ENCODE measurements at regions of chr17 and their contacts with region 1.

Region 1: DNA sequence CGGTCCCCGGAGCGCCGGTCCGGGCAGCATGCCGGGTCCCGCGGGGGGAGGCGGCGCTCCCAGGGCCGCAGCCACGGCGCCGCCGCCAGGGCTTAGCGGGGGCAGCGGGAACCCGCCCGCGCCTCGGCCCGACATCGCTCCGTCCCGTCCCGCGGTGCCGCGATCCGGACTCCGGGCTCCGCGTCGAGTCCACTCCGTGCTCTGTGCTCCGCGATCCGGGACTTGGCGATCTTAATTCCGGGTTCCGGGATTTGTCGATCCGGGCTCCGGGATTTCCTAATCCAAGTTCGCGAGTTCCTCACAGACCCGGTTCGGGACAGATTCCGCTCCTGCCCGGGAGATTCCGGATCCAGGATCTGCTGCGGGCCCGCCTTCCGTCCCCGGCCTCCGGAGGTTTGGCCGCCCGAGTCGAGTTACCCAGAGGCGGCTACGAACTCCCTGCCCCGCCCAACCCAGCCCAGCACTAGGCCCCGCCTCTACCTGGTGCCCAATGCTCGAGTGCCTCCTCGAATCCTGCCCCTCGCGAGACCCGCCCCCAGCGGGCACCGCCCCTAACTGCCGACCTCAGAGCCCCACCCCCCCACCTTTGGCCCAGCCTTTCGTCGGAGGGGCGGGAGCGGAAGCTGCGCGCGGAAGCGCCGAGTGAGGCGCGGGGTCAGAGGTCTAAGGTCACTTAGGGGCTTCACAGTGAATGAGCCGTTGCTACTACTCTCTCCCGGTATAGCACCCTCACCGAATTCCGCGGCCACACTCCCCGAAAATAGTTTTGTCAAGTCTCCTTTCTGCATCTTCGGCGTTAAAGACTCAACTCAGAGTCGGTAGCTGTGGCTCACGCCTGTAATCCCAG is at the start of gene SMARCD2:
- DNase-seq: peak; percentile 92 to 97
- H3K4me3 ChIP-seq: peak within 1 kb of the TSS; percentile 86
- H3K27ac ChIP-seq: peak within 1 kb of the TSS; percentile 47; the same call in 1 of the 2 replicates
- H3K4me1 ChIP-seq: peaks cover 43% of the 10 kb centered on the region
- H3K27me3 ChIP-seq: no peaks in the 10 kb centered on the region
- CTCF ChIP-seq: no peak
- total RNA-seq, gene SMARCD2: 73.6 and 98.7 TPM in 2 replicates

Region 2: GRCh38 chr17:63171428-63172393 is 671.1 kb before region 1 on chr17:
- CTCF ChIA-PET with region 1: no interaction called
- POLR2A ChIA-PET with region 1: no interaction called
- intact Hi-C with region 1: no loop called
- DNase-seq: no peak
- H3K4me3 ChIP-seq: no peak overlapping the region
- H3K27ac ChIP-seq: no peak overlapping the region
- H3K4me1 ChIP-seq: no peaks in the 10 kb centered on the region
- H3K27me3 ChIP-seq: no peaks in the 10 kb centered on the region
- CTCF ChIP-seq: no peak

Region 3: DNA sequence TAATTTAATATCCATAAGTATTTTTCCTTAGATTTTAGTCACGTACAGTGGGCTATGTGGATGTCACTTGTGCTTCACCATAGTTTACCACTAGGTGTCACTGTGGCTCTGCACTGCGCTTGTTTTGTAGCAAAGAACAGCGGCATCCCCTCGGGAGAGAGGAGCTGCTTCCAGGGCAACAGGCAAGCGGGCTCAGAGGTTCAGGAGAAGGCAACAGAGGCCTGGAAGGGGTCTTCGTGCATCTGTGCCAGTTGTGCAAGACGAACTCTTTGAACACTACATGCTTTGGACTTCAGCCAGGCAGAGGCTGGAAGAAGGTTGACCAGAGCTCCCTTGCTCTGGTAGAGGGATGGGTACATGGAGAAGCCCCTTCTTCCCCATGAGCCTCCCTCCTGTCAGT is 417.3 kb before region 1 on chr17:
- CTCF ChIA-PET with region 1: no interaction called
- POLR2A ChIA-PET with region 1: no interaction called
- intact Hi-C with region 1: loop called (anchors 10 kb)
- DNase-seq: peak in 1 of 2 experiments; percentile 66
- H3K4me3 ChIP-seq: no peak overlapping the region
- H3K27ac ChIP-seq: no peak overlapping the region
- H3K4me1 ChIP-seq: no peaks in the 10 kb centered on the region
- H3K27me3 ChIP-seq: no peaks in the 10 kb centered on the region
- CTCF ChIP-seq: peak; percentile 96

Region 4: DNA sequence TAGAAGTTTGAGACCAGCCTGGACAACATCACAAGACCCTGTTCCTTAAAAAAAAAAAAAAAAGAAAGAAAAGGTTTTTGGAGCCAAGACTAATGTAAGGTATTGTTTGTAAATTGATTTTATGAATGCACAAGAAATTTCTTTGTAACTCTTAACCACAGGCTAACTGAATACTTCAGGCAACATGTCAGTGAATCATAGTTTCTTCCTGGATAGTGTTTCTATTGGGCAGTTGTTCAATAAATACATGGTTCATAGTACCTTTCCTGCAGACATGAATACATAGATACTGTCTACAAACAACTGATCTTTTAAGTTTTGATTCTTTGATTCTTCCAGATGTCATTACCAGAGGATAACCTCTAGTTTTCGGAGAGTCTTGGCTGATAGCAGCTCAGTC is 57.2 kb before region 1 on chr17:
- CTCF ChIA-PET with region 1: no interaction called
- POLR2A ChIA-PET with region 1: no interaction called
- intact Hi-C with region 1: no loop called
- DNase-seq: peak in 1 of 2 experiments; percentile 66
- H3K4me3 ChIP-seq: no peak overlapping the region
- H3K27ac ChIP-seq: peak overlapping the region; percentile 83
- H3K4me1 ChIP-seq: peaks cover 53% of the 10 kb centered on the region
- H3K27me3 ChIP-seq: no peaks in the 10 kb centered on the region
- CTCF ChIP-seq: no peak

Region 5: DNA sequence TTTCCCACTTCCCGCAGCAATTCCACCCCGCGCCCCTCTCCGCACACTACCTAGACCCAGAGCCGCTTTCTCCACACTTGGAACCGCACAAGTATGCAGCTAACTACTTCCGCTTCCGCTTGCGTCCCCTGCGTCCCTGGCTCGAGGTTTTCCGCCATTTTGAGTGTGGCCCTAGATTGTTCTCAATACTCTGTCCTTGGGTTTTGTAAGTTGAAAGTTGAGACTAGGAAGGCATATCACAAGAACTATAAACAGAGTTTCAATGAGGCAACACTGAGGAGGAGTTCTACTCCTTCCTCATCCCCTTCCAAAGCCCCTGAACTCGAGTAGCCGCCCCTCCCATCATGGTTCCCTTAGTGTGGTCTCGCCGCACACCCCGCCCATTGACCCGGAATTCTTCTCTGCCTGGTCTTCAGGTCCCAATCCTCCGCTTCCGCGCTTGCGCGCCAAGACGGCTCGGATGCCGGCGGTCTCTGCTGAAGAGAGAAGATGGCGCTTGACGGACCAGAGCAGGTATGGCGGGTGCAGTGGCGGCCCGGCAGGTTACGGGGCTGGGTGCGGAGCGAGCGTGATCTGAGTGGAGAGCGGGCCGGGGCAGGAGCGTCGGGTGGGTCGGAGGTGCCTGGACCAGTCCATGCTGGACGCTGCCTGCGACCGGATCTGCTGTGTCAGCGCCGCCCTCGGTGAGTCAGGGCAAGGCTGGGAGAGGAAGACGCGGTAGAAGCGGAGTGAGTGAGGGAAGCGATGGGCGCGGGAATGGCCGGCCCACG is 15.6 kb before region 1 on chr17 and contains the starts of genes FTSJ3 and PSMC5:
- CTCF ChIA-PET with region 1: interaction called, 3 read pairs
- POLR2A ChIA-PET with region 1: interaction called, 6 read pairs
- intact Hi-C with region 1: loop called (anchors 1 kb)
- DNase-seq: peak; percentile 88 to 90
- H3K4me3 ChIP-seq: peak within 1 kb of the TSS; percentile 70
- H3K27ac ChIP-seq: peak within 1 kb of the TSS; percentile 89
- H3K4me1 ChIP-seq: peaks cover 18% of the 10 kb centered on the region
- H3K27me3 ChIP-seq: no peaks in the 10 kb centered on the region
- CTCF ChIP-seq: peak; percentile 38; the same call in 1 of the 2 replicates
- total RNA-seq, gene FTSJ3: 36.9 and 44.0 TPM in 2 replicates
- total RNA-seq, gene PSMC5: 128 and 150 TPM in 2 replicates

Measured in PC-9 (cell line).